Heart right ventricle (tissue), 16 donors: ENCODE measurements at regions of chr20 and their contacts with region 1.

Region 1: DNA sequence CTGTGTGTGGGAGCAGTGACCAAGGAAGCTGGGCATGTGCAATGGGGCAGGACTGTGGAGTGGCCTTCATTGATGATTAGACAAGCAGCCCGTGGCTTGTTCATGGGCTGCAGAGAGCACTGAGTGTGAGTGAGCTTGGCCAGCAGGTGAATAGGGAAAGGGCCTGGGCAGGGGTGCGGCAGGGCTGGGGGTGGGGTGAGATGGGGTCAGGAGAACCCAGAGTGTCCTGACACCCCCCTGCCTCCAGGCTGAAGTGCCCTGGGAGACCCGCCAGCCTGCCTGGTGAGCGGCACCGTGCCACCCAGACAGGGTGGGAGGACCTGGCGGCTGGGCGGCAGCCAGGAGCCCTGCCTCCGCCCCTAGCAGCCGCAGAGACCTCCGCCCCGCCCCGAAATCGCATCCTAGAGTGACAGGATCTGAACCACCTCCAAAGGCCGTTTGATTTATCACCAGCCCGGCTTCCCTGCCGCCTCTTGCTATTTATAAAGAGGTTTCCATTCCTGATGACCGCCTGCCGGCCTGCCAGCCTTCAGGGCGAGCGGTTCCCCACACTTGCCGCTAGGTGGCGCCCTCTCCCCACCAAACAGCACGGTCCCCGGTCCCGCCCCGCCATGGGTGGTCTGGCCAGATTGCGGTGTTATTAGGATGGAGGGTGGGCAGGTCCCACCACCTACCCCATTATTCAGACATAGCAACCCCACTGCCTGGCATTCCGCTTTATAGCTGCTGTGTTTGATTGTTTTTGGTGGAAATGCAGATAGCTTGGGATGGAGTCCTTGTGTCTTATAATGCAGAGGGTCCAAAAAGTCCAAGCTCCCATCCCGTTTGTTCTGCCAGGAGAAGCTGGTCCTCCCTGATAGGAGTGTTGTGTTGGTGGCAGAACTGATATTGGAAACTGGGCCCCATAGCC is 3.5 kb downstream of the MYLK2 start:
- DNase-seq: peak; percentile 82
- ATAC-seq: peak; percentile 83 to 93 (median 88)
- H3K4me3 ChIP-seq: peak overlapping the region in 1 of 10 donors; percentile 6
- H3K27ac ChIP-seq: peak overlapping the region in 5 of 10 donors; percentile 8 to 65 (median 41)
- H3K4me1 ChIP-seq: peaks cover 0 to 18% (median 8%) of the 10 kb centered on the region in 9 donors
- H3K27me3 ChIP-seq: peaks cover 0 to 6% (median 0%) of the 10 kb centered on the region in 7 donors
- CTCF ChIP-seq: peak; percentile 96 to 100 (median 99)

Region 2: DNA sequence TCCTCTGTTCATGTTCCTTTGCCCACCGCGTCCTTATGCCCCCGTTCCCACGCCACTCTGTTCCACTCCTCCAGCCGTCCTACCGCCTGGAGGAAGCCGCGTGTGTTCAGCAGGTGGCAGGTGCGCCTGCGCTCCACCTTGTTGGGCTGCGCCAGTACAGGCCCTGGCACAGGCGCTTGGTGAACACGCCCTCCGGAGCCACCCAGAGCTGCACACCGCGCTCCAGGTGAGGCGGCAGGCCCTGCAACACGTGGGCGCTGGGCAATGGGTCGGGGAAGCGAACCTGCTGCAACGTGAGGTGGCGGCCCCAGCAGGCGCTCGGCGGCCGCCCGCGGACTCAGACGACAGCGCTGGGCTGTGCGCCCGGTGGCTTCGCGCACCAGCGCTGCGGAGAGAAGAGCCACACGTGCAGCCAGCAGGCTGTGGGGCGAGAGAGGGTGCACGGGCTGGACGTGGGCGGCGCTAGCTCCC is 26.8 kb after region 1 on chr20:
- intact Hi-C with region 1: loop called in 3 of 10 experiments (anchors 1 to 2 kb)
- DNase-seq: no peak
- ATAC-seq: no peak
- H3K4me3 ChIP-seq: no peak overlapping the region
- H3K27ac ChIP-seq: no peak overlapping the region
- H3K4me1 ChIP-seq: peaks cover 0 to 18% (median 0%) of the 10 kb centered on the region in 9 donors
- H3K27me3 ChIP-seq: peaks cover 0 to 52% (median 39%) of the 10 kb centered on the region in 7 donors
- CTCF ChIP-seq: no peak

Region 3: GRCh38 chr20:31951530-31952453 is 129.1 kb after region 1 on chr20 and contains the start of gene PDRG1:
- intact Hi-C with region 1: loop called in 1 of 10 experiments (anchors 2 kb)
- DNase-seq: peak; percentile 94 to 97
- ATAC-seq: peak; percentile 97 to 99 (median 99)
- H3K4me3 ChIP-seq: peak within 1 kb of the TSS; percentile 67 to 98 (median 90)
- H3K27ac ChIP-seq: peak within 1 kb of the TSS in 9 of 10 donors; percentile 50 to 90 (median 86)
- H3K4me1 ChIP-seq: peaks cover 8 to 18% (median 15%) of the 10 kb centered on the region in 9 donors
- H3K27me3 ChIP-seq: peaks cover 0 to 11% (median 0%) of the 10 kb centered on the region in 7 donors
- CTCF ChIP-seq: peak; percentile 80 to 99 (median 96)
- total RNA-seq, gene PDRG1: 6.4 to 10.7 (median 7.5) TPM

Region 4: DNA sequence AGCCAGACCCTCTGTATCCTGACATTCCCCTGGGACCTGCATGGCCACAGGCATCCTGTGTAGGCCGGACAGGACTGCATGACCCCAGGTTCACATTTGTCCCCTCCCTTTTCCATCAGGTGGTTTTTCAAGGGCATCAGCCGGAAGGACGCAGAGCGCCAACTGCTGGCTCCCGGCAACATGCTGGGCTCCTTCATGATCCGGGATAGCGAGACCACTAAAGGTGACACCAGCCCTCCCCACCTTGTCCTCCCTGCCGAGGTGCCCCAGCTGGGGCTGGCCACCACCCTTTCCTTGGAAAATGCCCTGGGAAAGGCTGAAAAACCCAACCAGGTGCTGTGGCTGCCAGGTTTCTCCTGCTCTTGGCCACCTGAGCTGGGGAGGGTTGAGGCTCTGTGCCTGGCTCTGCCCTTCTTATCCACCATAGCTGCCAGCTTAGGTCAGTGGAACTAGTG is 257.0 kb after region 1 on chr20:
- intact Hi-C with region 1: loop called in 1 of 10 experiments (anchors 10 kb)
- DNase-seq: no peak
- ATAC-seq: no peak
- H3K4me3 ChIP-seq: no peak overlapping the region
- H3K27ac ChIP-seq: no peak overlapping the region
- H3K4me1 ChIP-seq: peaks cover 0 to 12% (median 0%) of the 10 kb centered on the region in 9 donors
- H3K27me3 ChIP-seq: peaks cover 0 to 25% (median 4%) of the 10 kb centered on the region in 7 donors
- CTCF ChIP-seq: no peak

Region 5: GRCh38 chr20:32091888-32092346 is 269.2 kb after region 1 on chr20:
- intact Hi-C with region 1: loop called in 7 of 10 experiments (anchors 5 to 10 kb)
- DNase-seq: peak; percentile 66 to 68
- ATAC-seq: peak in 6 of 8 donors; percentile 28 to 85 (median 76)
- H3K4me3 ChIP-seq: no peak overlapping the region
- H3K27ac ChIP-seq: no peak overlapping the region
- H3K4me1 ChIP-seq: peaks cover 0 to 6% (median 0%) of the 10 kb centered on the region in 9 donors
- H3K27me3 ChIP-seq: peaks cover 0 to 10% (median 0%) of the 10 kb centered on the region in 7 donors
- CTCF ChIP-seq: peak; percentile 76 to 98 (median 92)